ENCODE measurements at regions of chrX and their contacts with region 1.

Region 1: DNA sequence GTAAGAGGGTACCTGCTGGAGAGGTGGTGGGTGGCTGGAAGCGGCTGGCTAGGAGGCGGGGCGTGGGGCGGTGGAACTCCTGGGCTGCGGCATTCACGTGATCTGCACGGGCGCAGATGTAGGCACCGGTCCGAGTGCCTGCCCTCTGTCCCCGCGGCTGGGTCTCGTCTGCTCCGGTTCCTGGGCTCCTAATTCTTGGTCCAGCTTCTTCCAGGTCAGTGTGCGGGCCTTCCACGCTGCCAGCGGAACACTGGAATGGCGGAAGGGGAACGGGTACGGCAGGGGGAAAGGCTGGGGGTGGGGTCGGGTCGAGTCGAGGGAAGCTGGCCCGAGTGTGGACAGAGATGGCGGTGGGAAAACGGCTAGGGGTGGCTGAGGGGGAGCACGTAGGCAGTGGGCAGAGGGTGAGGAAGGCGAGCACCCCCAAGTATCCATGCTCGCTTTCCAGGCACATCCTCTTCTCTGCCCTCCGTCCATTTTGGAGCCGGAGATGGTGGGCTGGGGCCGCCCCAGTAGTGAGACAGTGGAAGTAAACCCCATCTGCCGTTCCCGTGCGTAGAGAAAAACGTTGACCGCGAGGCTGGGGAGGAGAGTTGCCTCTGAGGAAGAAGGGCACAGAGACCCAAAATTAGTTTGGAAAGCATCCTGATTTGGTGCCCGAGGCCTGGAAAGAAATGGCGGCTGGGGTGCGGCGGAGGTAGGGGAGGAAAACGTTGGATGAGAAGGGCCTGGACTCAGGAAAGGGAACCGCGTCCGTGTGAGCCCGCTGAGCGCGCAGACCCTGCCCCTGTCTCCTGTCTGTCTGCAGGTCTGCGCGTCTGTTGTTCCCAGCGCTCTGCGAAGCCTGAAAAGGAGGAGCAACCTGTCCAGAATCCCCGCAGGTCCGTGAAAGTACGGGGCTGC is at the start of gene TCEAL4:
- DNase-seq: peak; percentile 38
- H3K4me3 Mint-ChIP-seq: peak within 1 kb of the TSS; percentile 88
- H3K27ac Mint-ChIP-seq: peak within 1 kb of the TSS; percentile 80
- H3K4me1 Mint-ChIP-seq: peaks cover 7% of the 10 kb centered on the region
- H3K27me3 Mint-ChIP-seq: peaks cover 35% of the 10 kb centered on the region
- CTCF ChIP-seq: no peak
- total RNA-seq, gene TCEAL4: 63.7 and 64.4 TPM in 2 replicates

Region 2: DNA sequence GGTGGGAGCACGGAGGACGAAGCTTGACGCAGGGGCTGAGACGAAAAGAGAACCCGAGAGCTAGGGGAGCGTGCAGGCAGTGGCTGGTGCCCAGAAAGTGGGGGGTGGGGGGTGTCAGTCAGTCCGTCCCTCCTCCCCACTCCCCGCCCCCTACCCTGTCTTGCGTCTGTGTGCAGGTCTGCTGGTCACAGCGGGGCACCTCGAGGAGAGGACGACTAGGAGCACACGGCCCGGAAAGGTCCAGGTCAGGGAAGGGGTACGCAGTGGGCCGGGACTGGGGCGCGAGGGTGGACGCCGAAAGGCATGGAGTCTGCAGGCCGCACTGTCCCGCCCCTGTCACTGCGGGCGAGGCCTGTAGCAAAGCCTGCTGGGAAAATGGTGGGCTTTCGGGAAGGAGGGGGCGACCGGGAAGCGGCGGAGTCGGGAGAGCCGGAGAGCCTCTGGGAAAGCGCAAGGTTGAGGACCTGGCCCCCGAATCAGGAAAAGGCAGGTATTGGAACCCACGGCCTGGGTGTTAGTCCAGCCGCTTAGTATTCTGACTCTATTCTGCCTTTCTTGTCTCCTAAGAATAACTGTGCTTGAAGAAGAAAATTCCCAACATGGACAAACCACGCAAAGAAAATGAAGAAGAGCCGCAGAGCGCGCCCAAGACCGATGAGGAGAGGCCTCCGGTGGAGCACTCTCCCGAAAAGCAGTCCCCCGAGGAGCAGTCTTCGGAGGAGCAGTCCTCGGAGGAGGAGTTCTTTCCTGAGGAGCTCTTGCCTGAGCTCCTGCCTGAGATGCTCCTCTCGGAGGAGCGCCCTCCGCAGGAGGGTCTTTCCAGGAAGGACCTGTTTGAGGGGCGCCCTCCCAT is 43.9 kb after region 1 on chrX:
- CTCF ChIA-PET with region 1: interaction called, 3 read pairs
- POLR2A ChIA-PET with region 1: interaction called, 11 read pairs
- intact Hi-C with region 1: no loop called
- DNase-seq: peak; percentile 49
- H3K4me3 Mint-ChIP-seq: peak overlapping the region; percentile 84
- H3K27ac Mint-ChIP-seq: peak overlapping the region; percentile 84
- H3K4me1 Mint-ChIP-seq: peaks cover 13% of the 10 kb centered on the region
- H3K27me3 Mint-ChIP-seq: peaks cover 42% of the 10 kb centered on the region
- CTCF ChIP-seq: peak; percentile 28

Region 3: DNA sequence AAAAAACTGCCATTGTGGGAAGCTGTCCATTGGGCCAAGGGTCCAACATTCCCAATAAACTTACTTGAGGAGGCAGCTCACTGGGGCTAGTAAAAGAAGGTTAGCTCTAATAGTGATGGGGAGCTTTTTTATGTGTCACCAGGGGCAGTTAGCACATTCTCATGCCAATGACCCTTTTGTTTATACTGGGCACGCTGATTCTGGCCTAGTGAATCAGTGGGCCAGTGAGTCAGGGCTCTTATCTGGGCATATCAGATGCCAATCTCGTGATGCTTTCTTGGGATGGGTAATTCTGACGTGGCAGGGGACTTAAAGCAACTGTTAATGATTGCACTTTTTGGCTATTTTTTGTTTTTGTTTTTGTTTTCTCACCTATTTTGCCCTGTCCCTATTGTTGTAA is 71.0 kb after region 1 on chrX:
- CTCF ChIA-PET with region 1: no interaction called
- POLR2A ChIA-PET with region 1: no interaction called
- intact Hi-C with region 1: no loop called
- DNase-seq: peak; percentile 55
- H3K4me3 Mint-ChIP-seq: no peak overlapping the region
- H3K27ac Mint-ChIP-seq: peak overlapping the region; percentile 69
- H3K4me1 Mint-ChIP-seq: no peaks in the 10 kb centered on the region
- H3K27me3 Mint-ChIP-seq: peaks cover 22% of the 10 kb centered on the region
- CTCF ChIP-seq: no peak